ENCODE measurements at regions of chr17 and their contacts with region 1.

Region 1: GRCh38 chr17:11296994-11297393 is 56.0 kb downstream of the SHISA6 start:
- DNase-seq: no peak
- ATAC-seq: no peak
- H3K4me3 ChIP-seq: no peak overlapping the region
- H3K27ac ChIP-seq: no peak overlapping the region
- H3K4me1 ChIP-seq: no peaks in the 10 kb centered on the region
- H3K27me3 ChIP-seq: no peaks in the 10 kb centered on the region
- CTCF ChIP-seq: peak in 1 of 3 experiments; percentile 18; a peak in 1 of 6 replicates
- EP300 ChIP-seq: no peak
- POLR2A ChIP-seq: no peak
- RAD21 ChIP-seq: no peak

Region 2: DNA sequence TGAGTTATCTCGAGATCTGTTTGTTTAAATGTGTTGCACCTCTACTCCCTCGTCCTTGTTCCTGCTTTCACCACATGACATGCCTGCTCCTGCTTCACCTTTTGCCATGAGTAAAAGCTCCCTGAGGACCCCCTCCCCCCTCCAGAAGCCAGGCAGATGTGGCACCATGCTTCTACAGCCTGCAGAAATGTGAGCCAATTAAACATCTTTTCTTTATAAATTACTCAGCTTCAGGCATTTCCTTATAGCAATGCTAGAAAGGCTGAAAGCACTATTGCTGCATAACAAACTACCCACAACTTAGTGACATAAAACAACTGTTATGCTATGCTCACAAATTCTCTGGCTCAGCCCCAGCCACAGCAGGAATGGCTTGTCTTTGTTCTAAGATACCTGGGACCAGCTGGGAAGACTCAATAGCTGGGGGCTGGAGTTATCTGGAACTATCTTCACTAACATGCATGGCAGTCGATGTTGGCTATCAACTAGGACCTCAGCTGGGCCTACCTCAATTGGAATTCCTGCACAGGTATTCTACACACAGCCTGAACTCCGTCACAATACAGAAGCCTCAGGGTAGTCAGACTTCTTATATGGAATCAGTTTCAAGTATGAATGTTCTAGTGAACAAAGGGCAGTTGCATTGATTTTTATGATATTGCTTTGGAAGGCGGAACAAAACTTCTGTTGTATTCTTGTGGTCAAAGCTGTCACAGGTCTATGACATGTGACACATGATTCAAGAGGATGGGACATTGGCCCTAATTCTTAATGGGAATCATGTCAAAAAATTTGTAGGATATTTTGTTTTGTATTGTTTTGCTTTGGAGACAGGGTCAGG is 273.1 kb before region 1 on chr17:
- CTCF ChIA-PET with region 1: no interaction called
- POLR2A ChIA-PET with region 1: no interaction called
- RAD21 ChIA-PET with region 1: no interaction called
- SMC1A ChIA-PET with region 1: no interaction called
- in situ Hi-C with region 1: loop called (anchors 25 kb)
- intact Hi-C with region 1: no loop called
- DNase-seq: no peak
- ATAC-seq: no peak
- H3K4me3 ChIP-seq: no peak overlapping the region
- H3K27ac ChIP-seq: no peak overlapping the region
- H3K4me1 ChIP-seq: no peaks in the 10 kb centered on the region
- H3K27me3 ChIP-seq: no peaks in the 10 kb centered on the region
- CTCF ChIP-seq: no peak
- EP300 ChIP-seq: no peak
- POLR2A ChIP-seq: no peak
- RAD21 ChIP-seq: no peak

Region 3: GRCh38 chr17:11245187-11245586 is 51.8 kb before region 1 on chr17:
- CTCF ChIA-PET with region 1: no interaction called
- POLR2A ChIA-PET with region 1: no interaction called
- RAD21 ChIA-PET with region 1: no interaction called
- SMC1A ChIA-PET with region 1: no interaction called
- in situ Hi-C with region 1: loop called (anchors 5 kb)
- intact Hi-C with region 1: no loop called
- DNase-seq: no peak
- ATAC-seq: no peak
- H3K4me3 ChIP-seq: no peak overlapping the region
- H3K27ac ChIP-seq: no peak overlapping the region
- H3K4me1 ChIP-seq: no peaks in the 10 kb centered on the region
- H3K27me3 ChIP-seq: no peaks in the 10 kb centered on the region
- CTCF ChIP-seq: no peak
- EP300 ChIP-seq: no peak
- POLR2A ChIP-seq: no peak
- RAD21 ChIP-seq: no peak

Region 4: GRCh38 chr17:11825572-11826209 is 528.7 kb after region 1 on chr17:
- CTCF ChIA-PET with region 1: no interaction called
- POLR2A ChIA-PET with region 1: no interaction called
- RAD21 ChIA-PET with region 1: no interaction called
- SMC1A ChIA-PET with region 1: no interaction called
- in situ Hi-C with region 1: loop called (anchors 25 kb)
- intact Hi-C with region 1: no loop called
- DNase-seq: no peak
- ATAC-seq: no peak
- H3K4me3 ChIP-seq: no peak overlapping the region
- H3K27ac ChIP-seq: no peak overlapping the region
- H3K4me1 ChIP-seq: no peaks in the 10 kb centered on the region
- H3K27me3 ChIP-seq: no peaks in the 10 kb centered on the region
- CTCF ChIP-seq: no peak
- EP300 ChIP-seq: no peak
- POLR2A ChIP-seq: no peak
- RAD21 ChIP-seq: no peak

Region 5: DNA sequence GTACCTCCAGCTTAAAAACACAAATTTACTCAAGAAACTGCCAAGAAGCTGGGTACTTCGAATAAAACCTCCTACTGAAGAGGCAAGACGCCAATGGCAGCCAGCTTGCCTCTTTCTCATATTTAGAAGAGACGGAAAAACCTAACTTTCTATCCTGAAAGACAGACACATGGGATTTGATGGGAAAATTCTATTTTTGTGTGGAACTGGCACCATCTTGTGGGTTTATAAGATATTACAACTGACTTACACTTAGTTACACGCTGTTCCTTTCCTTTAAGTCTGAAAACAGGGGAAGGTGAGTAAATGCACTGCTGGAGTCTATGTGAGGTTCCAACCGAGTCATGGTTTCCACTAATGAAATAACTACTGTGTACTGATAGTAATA is 689.9 kb after region 1 on chr17:
- CTCF ChIA-PET with region 1: no interaction called
- POLR2A ChIA-PET with region 1: no interaction called
- RAD21 ChIA-PET with region 1: no interaction called
- SMC1A ChIA-PET with region 1: no interaction called
- in situ Hi-C with region 1: no loop called
- intact Hi-C with region 1: no loop called
- DNase-seq: no peak
- ATAC-seq: no peak
- H3K4me3 ChIP-seq: no peak overlapping the region
- H3K27ac ChIP-seq: no peak overlapping the region
- H3K4me1 ChIP-seq: no peaks in the 10 kb centered on the region
- H3K27me3 ChIP-seq: no peaks in the 10 kb centered on the region
- CTCF ChIP-seq: peak in 2 of 3 experiments; percentile 32 to 37; a peak in 4 of 6 replicates
- EP300 ChIP-seq: no peak
- POLR2A ChIP-seq: no peak
- RAD21 ChIP-seq: peak; percentile 32; the same call in 1 of the 2 replicates

Region 6: DNA sequence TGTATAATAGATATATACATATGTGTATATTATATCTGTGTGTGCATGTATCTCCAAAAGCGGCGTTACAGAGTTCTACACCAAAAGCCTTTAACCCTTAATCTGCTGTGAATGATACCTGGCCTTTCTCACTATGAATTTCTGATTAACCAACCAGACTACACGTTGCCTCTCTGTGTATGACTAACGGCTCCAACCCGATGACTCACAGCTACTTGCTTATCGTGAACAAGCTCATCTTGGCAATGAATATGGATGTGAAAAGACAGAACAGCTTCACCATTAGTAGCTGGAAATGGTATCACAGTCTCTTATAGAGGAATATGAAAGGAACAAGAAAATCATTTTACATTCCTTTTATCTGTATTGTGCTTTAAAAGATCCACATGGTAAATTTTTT is 1468.6 kb after region 1 on chr17:
- CTCF ChIA-PET with region 1: no interaction called
- POLR2A ChIA-PET with region 1: no interaction called
- RAD21 ChIA-PET with region 1: no interaction called
- SMC1A ChIA-PET with region 1: no interaction called
- in situ Hi-C with region 1: loop called (anchors 25 kb)
- intact Hi-C with region 1: no loop called
- DNase-seq: no peak
- ATAC-seq: no peak
- H3K4me3 ChIP-seq: no peak overlapping the region
- H3K27ac ChIP-seq: no peak overlapping the region
- H3K4me1 ChIP-seq: no peaks in the 10 kb centered on the region
- H3K27me3 ChIP-seq: no peaks in the 10 kb centered on the region; a peak in 1 of 4 replicates
- CTCF ChIP-seq: no peak
- EP300 ChIP-seq: no peak
- POLR2A ChIP-seq: no peak
- RAD21 ChIP-seq: no peak

Measured in GM12878 (cell line).